Heart right ventricle (tissue), 16 donors: ENCODE measurements at regions of chr1 and their contacts with region 1.

Region 1: DNA sequence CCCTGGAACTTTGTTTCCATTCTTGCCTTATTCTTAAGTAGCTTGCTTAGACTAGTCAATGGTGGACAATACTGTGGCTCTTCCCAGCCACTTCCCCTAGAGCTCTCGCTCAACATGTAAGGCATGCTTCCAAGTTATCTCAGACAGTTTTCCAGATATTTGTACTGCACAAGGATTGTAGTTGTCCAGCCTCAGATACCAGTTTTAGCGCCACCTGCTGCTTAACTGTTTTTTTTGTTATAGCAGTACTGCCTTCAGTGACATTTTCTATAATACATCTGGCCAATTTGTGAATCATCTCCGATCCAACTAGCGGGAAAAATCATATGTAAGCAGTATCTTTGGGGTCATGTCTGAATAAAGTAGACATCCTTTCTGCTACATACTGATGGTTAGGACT is 346.7 kb upstream of the ADGRL4 start:
- DNase-seq: peak in 1 of 2 donors; percentile 33
- ATAC-seq: peak in 5 of 8 donors; percentile 39 to 63 (median 46)
- H3K4me3 ChIP-seq: no peak overlapping the region
- H3K27ac ChIP-seq: no peak overlapping the region
- H3K4me1 ChIP-seq: no peaks in the 10 kb centered on the region
- H3K27me3 ChIP-seq: no peaks in the 10 kb centered on the region
- CTCF ChIP-seq: peak in 8 of 9 donors; percentile 7 to 61 (median 44)

Region 2: GRCh38 chr1:78839704-78840277 is 513.4 kb before region 1 on chr1:
- intact Hi-C with region 1: loop called in 3 of 10 experiments (anchors 5 to 10 kb)
- DNase-seq: peak in 1 of 2 donors; percentile 25
- ATAC-seq: peak in 1 of 8 donors; percentile 38
- H3K4me3 ChIP-seq: no peak overlapping the region
- H3K27ac ChIP-seq: no peak overlapping the region
- H3K4me1 ChIP-seq: peaks cover 0 to 17% (median 11%) of the 10 kb centered on the region in 9 donors
- H3K27me3 ChIP-seq: no peaks in the 10 kb centered on the region
- CTCF ChIP-seq: peak; percentile 32 to 85 (median 73)

Region 3: GRCh38 chr1:79259388-79260336 is 93.6 kb before region 1 on chr1:
- intact Hi-C with region 1: loop called in 6 of 10 experiments (anchors 5 to 10 kb)
- DNase-seq: no peak
- ATAC-seq: peak in 1 of 8 donors; percentile 47
- H3K4me3 ChIP-seq: no peak overlapping the region
- H3K27ac ChIP-seq: no peak overlapping the region
- H3K4me1 ChIP-seq: no peaks in the 10 kb centered on the region
- H3K27me3 ChIP-seq: no peaks in the 10 kb centered on the region
- CTCF ChIP-seq: peak in 7 of 9 donors; percentile 40 to 64 (median 55)